Right ventricle myocardium inferior (tissue), 1 donor: ENCODE measurements at regions of chr13 and their contacts with region 1.

Region 1: DNA sequence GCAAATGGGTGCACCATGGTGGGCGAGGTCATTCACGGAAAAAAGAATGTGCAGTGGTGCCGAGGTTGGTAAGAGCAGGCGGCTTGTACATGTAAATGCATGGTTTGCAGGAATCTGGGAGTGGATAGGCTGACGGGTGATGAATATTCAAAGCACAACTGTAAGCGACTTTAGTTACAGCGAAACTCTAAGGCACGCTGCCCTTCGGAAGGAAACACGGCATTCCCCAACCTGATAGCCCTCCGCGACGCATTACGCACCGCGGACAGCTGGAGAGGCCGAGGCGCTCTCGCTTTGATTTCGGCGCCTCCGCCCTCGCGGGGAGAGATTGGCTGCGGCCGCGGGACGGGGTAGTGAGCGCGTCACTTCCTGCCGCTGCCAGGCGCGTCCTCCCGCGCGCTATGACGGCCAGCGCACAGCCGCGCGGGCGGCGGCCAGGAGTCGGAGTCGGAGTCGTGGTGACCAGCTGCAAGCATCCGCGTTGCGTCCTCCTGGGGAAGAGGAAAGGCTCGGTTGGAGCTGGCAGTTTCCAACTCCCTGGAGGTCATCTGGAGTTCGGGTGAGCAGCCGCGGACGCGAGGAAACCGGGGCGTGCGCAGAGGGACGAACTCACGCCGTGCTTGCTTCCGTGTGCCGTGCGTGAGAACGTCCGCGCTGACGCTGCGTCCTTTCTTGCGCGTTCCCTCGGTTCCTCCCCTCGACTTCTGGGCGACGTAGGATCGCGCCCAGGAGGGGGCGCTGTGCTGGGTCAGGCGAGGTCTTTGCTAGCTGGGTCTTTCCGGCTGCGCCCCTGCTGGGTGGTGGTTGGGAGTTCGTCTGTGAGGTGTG is at the start of gene NUDT15:
- DNase-seq: peak; percentile 98
- ATAC-seq: peak; percentile 99
- total RNA-seq, gene NUDT15: 12.1 TPM

Region 2: GRCh38 chr13:47539317-47539716 is 498.2 kb before region 1 on chr13:
- intact Hi-C with region 1: no loop called
- DNase-seq: no peak
- ATAC-seq: no peak

Region 3: GRCh38 chr13:48078251-48078656 is 40.7 kb after region 1 on chr13:
- intact Hi-C with region 1: no loop called
- DNase-seq: no peak
- ATAC-seq: no peak

Region 4: GRCh38 chr13:48110931-48111721 is 73.6 kb after region 1 on chr13:
- intact Hi-C with region 1: no loop called
- DNase-seq: no peak
- ATAC-seq: peak; percentile 93

Region 5: DNA sequence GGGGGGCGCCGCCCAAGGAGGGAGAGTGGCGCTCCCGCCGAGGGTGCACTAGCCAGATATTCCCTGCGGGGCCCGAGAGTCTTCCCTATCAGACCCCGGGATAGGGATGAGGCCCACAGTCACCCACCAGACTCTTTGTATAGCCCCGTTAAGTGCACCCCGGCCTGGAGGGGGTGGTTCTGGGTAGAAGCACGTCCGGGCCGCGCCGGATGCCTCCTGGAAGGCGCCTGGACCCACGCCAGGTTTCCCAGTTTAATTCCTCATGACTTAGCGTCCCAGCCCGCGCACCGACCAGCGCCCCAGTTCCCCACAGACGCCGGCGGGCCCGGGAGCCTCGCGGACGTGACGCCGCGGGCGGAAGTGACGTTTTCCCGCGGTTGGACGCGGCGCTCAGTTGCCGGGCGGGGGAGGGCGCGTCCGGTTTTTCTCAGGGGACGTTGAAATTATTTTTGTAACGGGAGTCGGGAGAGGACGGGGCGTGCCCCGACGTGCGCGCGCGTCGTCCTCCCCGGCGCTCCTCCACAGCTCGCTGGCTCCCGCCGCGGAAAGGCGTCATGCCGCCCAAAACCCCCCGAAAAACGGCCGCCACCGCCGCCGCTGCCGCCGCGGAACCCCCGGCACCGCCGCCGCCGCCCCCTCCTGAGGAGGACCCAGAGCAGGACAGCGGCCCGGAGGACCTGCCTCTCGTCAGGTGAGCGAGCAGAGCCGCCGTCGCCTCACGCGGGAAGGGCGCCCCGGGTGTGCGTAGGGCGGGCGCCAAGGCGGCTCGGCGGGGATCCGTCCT is 266.0 kb after region 1 on chr13 and contains the start of gene RB1:
- intact Hi-C with region 1: loop called (anchors 1 kb)
- DNase-seq: peak; percentile 97
- ATAC-seq: peak; percentile 95
- total RNA-seq, gene RB1: 27.7 TPM